ENCODE measurements at regions of chr2 and their contacts with region 1.

Region 1: DNA sequence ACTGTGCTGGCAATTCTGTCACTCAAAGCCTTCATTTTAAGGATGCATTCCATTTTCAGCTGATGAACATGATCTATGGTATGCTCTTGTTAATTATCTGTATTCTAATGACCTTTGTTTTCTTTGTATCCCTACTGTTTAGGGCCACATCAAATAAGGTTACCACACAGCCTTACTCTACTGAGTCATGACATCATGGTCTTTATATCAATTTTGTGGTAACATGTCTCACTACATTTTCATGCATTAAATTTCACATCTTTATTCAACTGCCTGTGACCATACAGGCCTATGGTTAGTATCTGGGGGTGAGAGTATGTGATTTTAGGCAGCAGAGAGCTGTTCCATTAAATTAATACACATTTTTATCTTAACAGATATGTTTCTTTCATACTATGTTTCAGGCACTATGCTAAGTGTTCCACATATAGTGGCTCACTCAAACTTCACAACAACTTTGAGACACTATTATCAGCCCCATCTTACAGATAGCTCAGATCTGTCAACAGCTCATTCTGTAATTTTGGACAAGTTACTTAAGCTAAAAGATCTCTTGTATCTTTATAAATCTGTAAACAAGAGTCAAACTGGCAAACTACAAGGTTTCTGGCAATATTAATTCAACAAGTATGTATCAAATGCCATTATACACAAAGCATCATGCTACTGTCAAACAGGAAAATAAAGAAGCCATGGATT is 18.0 kb downstream of the LRPPRC start:
- DNase-seq: no peak
- ATAC-seq: no peak
- H3K4me3 ChIP-seq: no peak overlapping the region
- H3K27ac ChIP-seq: no peak overlapping the region
- H3K4me1 ChIP-seq: no peaks in the 10 kb centered on the region
- H3K27me3 ChIP-seq: no peaks in the 10 kb centered on the region
- CTCF ChIP-seq: no peak

Region 2: DNA sequence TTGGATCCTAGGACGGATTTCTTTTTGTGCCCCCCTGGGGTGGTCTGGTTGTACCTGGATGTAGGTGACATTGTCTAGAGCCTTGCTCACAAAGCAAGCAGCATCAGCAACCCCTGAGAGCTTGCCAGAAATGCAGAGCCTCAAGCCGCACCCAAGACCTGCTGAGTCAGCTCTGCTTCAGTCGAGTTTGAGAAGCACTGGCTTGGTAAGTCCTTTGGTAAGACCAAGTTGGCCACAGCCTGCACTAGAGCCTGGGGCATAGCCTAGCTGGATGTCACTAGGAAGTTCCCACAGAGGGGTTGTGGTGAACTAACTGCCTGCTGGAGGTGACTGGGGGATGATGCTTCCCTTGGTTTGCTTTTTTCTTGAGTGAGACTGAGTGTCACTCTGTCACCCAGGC is 145.4 kb before region 1 on chr2:
- CTCF ChIA-PET with region 1: no interaction called
- POLR2A ChIA-PET with region 1: no interaction called
- in situ Hi-C with region 1: no loop called
- intact Hi-C with region 1: no loop called
- DNase-seq: no peak
- ATAC-seq: no peak
- H3K4me3 ChIP-seq: no peak overlapping the region
- H3K27ac ChIP-seq: no peak overlapping the region
- H3K4me1 ChIP-seq: no peaks in the 10 kb centered on the region
- H3K27me3 ChIP-seq: peaks cover 6% of the 10 kb centered on the region; the same call in 1 of the 2 replicates
- CTCF ChIP-seq: no peak

Region 3: DNA sequence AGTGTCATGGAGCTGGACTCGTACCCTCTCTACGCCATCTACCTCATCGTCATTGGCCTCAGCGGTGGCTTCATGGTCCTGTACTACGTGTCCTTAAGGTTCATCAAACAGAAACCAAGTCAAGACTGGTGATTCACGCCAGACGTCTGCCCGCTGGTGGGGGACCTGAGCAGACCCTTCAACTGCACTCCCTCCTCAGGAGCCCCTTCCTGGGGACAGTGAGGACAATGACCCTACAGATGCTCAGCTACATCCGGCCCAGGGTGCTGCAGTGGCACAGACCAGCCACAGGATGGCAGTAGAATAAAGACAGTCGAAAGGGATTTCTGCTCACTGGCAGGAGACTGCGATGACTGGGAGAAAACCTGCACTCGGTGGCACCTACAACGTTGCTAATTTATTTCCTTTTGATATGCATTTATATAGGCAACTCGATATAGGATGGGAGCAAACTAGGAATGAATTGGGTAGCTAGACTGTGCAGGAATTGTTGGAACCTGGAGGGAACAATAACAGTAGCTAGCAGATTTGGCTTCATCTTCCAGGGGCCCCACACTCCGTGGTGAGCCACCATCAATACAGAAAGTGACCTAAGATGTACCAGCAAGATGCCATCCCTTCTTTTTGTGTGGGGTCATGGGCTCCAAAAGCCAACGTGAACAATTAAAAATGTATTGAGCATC is 99.9 kb before region 1 on chr2:
- CTCF ChIA-PET with region 1: no interaction called
- POLR2A ChIA-PET with region 1: interaction called, 10 read pairs
- in situ Hi-C with region 1: no loop called
- intact Hi-C with region 1: no loop called
- DNase-seq: peak; percentile 55
- ATAC-seq: peak; percentile 87
- H3K4me3 ChIP-seq: no peak overlapping the region
- H3K27ac ChIP-seq: no peak overlapping the region
- H3K4me1 ChIP-seq: peaks cover 3% of the 10 kb centered on the region
- H3K27me3 ChIP-seq: no peaks in the 10 kb centered on the region
- CTCF ChIP-seq: peak; percentile 96

Region 4: GRCh38 chr2:44184106-44184505 is 206.3 kb after region 1 on chr2:
- CTCF ChIA-PET with region 1: no interaction called
- POLR2A ChIA-PET with region 1: no interaction called
- in situ Hi-C with region 1: no loop called
- intact Hi-C with region 1: no loop called
- DNase-seq: no peak
- ATAC-seq: no peak
- H3K4me3 ChIP-seq: no peak overlapping the region
- H3K27ac ChIP-seq: no peak overlapping the region
- H3K4me1 ChIP-seq: peaks cover 3% of the 10 kb centered on the region; the same call in 1 of the 2 replicates
- H3K27me3 ChIP-seq: no peaks in the 10 kb centered on the region
- CTCF ChIP-seq: no peak

Measured in Panc1 (cell line).